ENCODE measurements at regions of chr2 and their contacts with region 1.

Region 1: DNA sequence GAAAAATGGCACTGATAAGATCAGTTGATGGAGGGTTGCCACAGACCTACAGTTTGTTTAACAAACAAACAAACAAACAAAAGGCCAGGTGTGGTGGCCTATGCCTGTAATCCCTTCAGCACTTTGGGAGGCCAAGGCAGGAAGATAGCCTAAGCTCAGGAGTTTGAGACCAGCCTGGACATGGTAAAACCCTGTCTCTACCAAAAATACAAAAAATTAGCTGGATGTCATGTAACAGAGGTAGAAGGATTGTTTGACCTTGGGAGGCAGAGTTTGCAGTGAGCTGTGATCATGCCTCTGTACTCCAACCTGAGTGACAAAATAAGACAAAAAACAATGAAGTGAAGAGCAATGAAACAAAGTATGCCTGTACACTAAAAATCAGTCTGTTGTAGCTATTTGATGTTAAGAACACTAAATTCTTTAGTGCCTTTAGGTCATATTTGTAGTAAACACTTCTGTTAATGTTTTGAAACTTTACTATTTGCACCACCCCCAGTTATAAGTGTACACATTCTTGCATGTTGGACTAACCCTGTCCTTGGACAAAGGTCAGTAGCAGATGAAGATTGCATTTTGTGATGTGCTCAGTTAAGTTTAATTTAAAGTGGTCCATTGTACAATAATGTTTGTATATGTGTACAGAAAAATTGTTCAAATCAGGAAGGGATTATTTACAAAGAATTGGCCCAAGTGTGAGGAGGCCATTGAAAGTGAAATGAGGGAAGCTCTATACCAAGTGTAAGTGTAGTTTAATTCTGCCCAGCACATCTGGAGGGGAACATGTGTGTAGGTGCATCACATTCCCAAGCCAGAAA is 73.9 kb downstream of the KYNU start:
- DNase-seq: peak; percentile 93
- ATAC-seq: peak; percentile 92
- H3K4me3 ChIP-seq: peak overlapping the region in 1 of 3 experiments; percentile 34; a peak in 1 of 6 replicates
- H3K27ac ChIP-seq: peak overlapping the region; percentile 85
- H3K4me1 ChIP-seq: peaks cover 43% of the 10 kb centered on the region
- H3K27me3 ChIP-seq: no peaks in the 10 kb centered on the region
- CTCF ChIP-seq: no peak
- EP300 ChIP-seq: peak in 1 of 2 experiments; percentile 96; a peak in 2 of 4 replicates
- POLR2A ChIP-seq: no peak
- RAD21 ChIP-seq: no peak

Region 2: GRCh38 chr2:142813830-142814829 is 137.3 kb before region 1 on chr2:
- CTCF ChIA-PET with region 1: no interaction called
- POLR2A ChIA-PET with region 1: interaction called, 12 read pairs
- in situ Hi-C with region 1: no loop called
- intact Hi-C with region 1: loop called (anchors 1 kb)
- DNase-seq: peak; percentile 78
- ATAC-seq: peak; percentile 99
- H3K4me3 ChIP-seq: peak overlapping the region; percentile 19 to 28 (median 24); a peak in 3 of 6 replicates
- H3K27ac ChIP-seq: peak overlapping the region; percentile 58
- H3K4me1 ChIP-seq: peaks cover 42% of the 10 kb centered on the region
- H3K27me3 ChIP-seq: no peaks in the 10 kb centered on the region
- CTCF ChIP-seq: no peak
- EP300 ChIP-seq: peak in 1 of 2 experiments; percentile 92; a peak in 2 of 4 replicates
- POLR2A ChIP-seq: no peak
- RAD21 ChIP-seq: no peak

Region 3: GRCh38 chr2:142863485-142863961 is 87.9 kb before region 1 on chr2:
- CTCF ChIA-PET with region 1: no interaction called
- POLR2A ChIA-PET with region 1: interaction called, 9 read pairs
- in situ Hi-C with region 1: no loop called
- intact Hi-C with region 1: loop called (anchors 1 kb)
- DNase-seq: peak; percentile 98
- ATAC-seq: peak; percentile 99
- H3K4me3 ChIP-seq: peak overlapping the region in 1 of 3 experiments; percentile 17; a peak in 1 of 6 replicates
- H3K27ac ChIP-seq: peak overlapping the region; percentile 58
- H3K4me1 ChIP-seq: peaks cover 52% of the 10 kb centered on the region
- H3K27me3 ChIP-seq: no peaks in the 10 kb centered on the region
- CTCF ChIP-seq: no peak
- EP300 ChIP-seq: peak; percentile 39 to 96; a peak in 3 of 4 replicates
- POLR2A ChIP-seq: no peak
- RAD21 ChIP-seq: no peak

Region 4: DNA sequence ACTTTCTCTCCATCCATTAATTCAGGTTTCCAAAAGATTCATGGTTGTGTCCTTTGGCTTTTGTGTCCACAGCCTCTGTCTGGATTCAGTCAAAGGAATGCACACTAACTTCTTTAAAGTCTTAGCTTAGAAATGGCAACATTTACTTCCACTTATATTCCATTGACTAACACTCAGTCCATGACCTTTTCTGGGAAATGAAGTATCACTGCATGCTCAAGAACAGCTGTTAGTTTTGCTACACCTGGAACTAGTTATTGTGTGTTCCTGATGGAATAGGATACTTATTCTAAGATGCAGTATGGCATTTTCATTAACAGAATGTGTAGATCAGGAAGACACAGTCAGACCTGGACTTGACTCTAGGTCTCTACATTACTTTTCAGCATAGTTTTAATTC is 14.9 kb after region 1 on chr2:
- CTCF ChIA-PET with region 1: no interaction called
- POLR2A ChIA-PET with region 1: no interaction called
- in situ Hi-C with region 1: no loop called
- intact Hi-C with region 1: loop called (anchors 2 kb)
- DNase-seq: no peak
- ATAC-seq: no peak
- H3K4me3 ChIP-seq: no peak overlapping the region
- H3K27ac ChIP-seq: no peak overlapping the region
- H3K4me1 ChIP-seq: no peaks in the 10 kb centered on the region
- H3K27me3 ChIP-seq: no peaks in the 10 kb centered on the region
- CTCF ChIP-seq: no peak
- EP300 ChIP-seq: no peak
- POLR2A ChIP-seq: no peak
- RAD21 ChIP-seq: no peak